Spleen (tissue), 13 donors: ENCODE measurements at regions of chr12 and their contacts with region 1.

Region 1: DNA sequence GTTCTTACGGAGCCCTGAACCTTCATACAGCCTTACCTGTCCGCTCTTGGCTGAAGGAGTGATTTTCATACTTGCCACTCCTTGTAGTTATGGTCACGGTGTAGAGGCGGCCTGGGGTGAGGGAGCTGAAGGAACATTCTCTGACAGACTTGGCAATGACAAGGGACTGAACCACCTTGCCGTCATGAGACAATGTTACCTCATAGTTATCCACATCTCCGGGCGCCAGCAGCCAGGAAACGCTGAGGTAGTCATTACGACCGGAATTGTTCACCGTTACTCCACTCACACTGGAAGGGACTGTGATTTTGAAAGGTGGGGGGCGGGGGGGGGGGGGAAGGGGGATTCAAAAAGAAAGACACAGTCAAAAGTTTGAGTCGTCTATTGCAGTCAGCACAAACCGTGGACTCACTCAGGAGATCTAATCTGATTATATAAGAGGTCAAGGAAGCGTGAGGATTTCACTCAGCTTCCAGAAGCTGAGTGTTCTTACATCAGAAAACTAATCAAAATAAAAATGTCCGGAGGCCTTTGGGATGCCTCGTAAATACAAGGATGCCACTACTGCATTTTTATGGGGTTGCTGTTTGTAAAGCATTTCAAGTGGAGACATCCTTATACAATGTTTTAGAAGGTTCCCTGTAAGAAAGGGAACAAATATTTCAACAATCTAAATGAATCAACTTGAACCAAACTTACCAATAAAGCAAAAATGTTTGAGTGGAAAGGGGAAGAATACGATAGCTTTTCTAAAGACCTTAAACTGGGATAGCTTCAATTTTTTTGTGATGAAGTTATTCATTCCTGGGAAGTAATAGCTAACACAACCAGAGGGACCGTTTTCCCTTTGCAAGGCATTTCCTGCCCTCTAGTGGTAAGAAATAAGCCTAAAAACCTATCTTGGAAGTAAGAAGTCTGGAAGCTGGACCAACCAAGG is 60.6 kb downstream of the PTPRB start:
- DNase-seq: no peak
- H3K4me3 ChIP-seq: no peak overlapping the region
- H3K27ac ChIP-seq: peak overlapping the region in 1 of 8 donors; percentile 5
- H3K4me1 ChIP-seq: peaks cover 0 to 8% (median 0%) of the 10 kb centered on the region in 6 donors
- H3K27me3 ChIP-seq: no peaks in the 10 kb centered on the region
- CTCF ChIP-seq: peak; percentile 5 to 75 (median 60)
- POLR2A ChIP-seq: no peak

Region 2: DNA sequence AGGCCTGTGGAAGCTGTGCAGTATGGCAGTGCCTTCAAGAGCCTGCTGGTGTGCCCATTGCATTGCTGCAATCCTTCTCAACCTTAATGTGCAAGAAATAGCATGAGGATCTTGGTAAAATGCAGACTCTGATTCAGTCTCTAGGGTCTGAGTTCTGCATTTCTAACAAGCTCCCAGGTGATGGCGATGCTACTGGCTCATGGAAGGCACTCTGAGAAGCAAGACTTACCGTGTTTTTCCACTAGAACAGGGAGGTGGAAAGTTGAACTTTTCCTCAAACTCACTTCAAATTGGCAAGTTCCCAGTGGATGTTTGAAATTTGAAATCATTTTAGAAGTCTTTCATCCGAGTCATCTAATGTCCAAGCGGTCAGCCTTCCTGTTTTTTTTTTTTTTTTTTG is 696.0 kb before region 1 on chr12:
- intact Hi-C with region 1: loop called (anchors 5 kb)
- DNase-seq: no peak
- H3K4me3 ChIP-seq: no peak overlapping the region
- H3K27ac ChIP-seq: no peak overlapping the region
- H3K4me1 ChIP-seq: peaks cover 0 to 22% (median 6%) of the 10 kb centered on the region in 6 donors
- H3K27me3 ChIP-seq: peaks cover 0 to 12% (median 0%) of the 10 kb centered on the region in 7 donors
- CTCF ChIP-seq: no peak
- POLR2A ChIP-seq: no peak

Region 3: GRCh38 chr12:69900720-69901131 is 675.9 kb before region 1 on chr12:
- intact Hi-C with region 1: loop called (anchors 5 kb)
- DNase-seq: no peak
- H3K4me3 ChIP-seq: no peak overlapping the region
- H3K27ac ChIP-seq: no peak overlapping the region
- H3K4me1 ChIP-seq: peaks cover 0 to 11% (median 10%) of the 10 kb centered on the region in 6 donors
- H3K27me3 ChIP-seq: no peaks in the 10 kb centered on the region
- CTCF ChIP-seq: peak; percentile 35 to 88 (median 75)
- POLR2A ChIP-seq: no peak

Region 4: DNA sequence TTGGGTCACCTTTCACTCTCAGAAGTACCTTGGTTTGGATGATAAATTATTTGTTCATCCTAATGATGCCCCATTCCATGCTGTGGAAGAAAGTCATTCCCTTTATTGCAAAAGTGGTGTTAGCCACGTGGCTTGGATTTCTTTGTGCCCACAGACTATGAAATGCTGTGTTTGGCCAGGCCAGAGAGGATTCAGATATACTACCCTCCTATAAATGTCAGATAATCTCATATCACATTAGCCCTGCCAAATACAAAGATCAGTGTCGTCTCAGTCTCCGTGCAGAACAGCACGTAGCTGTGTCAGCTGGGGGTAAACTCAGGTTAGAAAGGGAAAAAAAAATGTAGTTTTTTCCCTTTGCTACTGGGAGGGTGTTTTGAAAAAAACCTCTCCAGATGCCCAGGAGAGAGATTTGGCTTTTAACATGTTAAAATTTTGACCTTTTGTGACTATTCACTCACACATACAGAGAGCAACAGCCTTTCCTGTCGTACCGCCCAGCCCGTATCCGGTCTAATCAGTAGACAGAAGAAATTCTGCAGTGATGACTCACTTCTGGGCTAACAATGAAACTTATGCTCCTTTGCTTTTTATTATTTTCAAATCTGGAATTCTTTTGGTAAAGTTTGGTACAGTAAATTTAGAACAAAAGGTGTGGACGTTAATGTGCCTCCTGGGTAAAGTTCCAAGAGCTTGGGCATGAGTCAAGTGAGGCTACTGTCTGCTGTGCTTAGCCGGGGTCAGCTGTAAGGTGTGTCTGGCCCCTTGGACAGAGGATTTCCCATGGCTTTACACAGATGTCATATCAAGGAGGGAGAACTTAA is 69.1 kb after region 1 on chr12:
- intact Hi-C with region 1: no loop called
- DNase-seq: peak; percentile 82
- H3K4me3 ChIP-seq: no peak overlapping the region
- H3K27ac ChIP-seq: peak overlapping the region; percentile 51 to 76 (median 74)
- H3K4me1 ChIP-seq: peaks cover 4 to 40% (median 10%) of the 10 kb centered on the region in 6 donors
- H3K27me3 ChIP-seq: peaks cover 0 to 6% (median 0%) of the 10 kb centered on the region in 7 donors
- CTCF ChIP-seq: no peak
- POLR2A ChIP-seq: no peak